Transverse colon (tissue), 4 donors: ENCODE measurements at regions of chr4 and their contacts with region 1.

Region 1: GRCh38 chr4:11593576-11594116 is 165.0 kb upstream of the HS3ST1 start:
- DNase-seq: no peak
- H3K4me3 ChIP-seq: no peak overlapping the region
- H3K27ac ChIP-seq: no peak overlapping the region
- H3K4me1 ChIP-seq: no peaks in the 10 kb centered on the region
- H3K27me3 ChIP-seq: no peaks in the 10 kb centered on the region
- CTCF ChIP-seq: no peak
- EP300 ChIP-seq: no peak
- POLR2A ChIP-seq: no peak

Region 2: GRCh38 chr4:11611916-11612315 is 18.3 kb after region 1 on chr4:
- in situ Hi-C with region 1: no loop called
- intact Hi-C with region 1: no loop called
- DNase-seq: no peak
- H3K4me3 ChIP-seq: no peak overlapping the region
- H3K27ac ChIP-seq: no peak overlapping the region
- H3K4me1 ChIP-seq: peaks cover 0 to 6% (median 1%) of the 10 kb centered on the region in 4 donors
- H3K27me3 ChIP-seq: no peaks in the 10 kb centered on the region
- CTCF ChIP-seq: no peak
- EP300 ChIP-seq: no peak
- POLR2A ChIP-seq: no peak

Region 3: DNA sequence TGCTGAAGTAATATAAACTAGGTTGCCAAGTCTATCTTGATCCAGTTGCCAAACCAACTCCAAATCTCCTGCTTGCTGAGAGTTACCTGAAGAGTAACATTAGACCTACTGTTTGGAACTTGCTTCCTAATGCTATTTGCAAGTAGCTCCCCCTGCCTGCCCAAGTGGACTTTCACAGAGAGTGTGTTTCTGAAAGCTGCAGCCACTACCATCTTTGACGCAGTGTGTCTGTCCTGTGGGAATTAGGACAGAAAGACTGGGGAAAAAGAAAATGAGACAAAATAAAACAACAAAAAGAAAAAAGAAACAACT is 30.0 kb after region 1 on chr4:
- in situ Hi-C with region 1: no loop called
- intact Hi-C with region 1: loop called (anchors 1 kb)
- DNase-seq: peak; percentile 71
- H3K4me3 ChIP-seq: no peak overlapping the region
- H3K27ac ChIP-seq: no peak overlapping the region
- H3K4me1 ChIP-seq: peaks cover 3 to 38% (median 10%) of the 10 kb centered on the region in 4 donors
- H3K27me3 ChIP-seq: no peaks in the 10 kb centered on the region
- CTCF ChIP-seq: peak; percentile 18 to 61 (median 41)
- EP300 ChIP-seq: no peak
- POLR2A ChIP-seq: no peak